ENCODE measurements at regions of chr1 and their contacts with region 1.

Region 1: DNA sequence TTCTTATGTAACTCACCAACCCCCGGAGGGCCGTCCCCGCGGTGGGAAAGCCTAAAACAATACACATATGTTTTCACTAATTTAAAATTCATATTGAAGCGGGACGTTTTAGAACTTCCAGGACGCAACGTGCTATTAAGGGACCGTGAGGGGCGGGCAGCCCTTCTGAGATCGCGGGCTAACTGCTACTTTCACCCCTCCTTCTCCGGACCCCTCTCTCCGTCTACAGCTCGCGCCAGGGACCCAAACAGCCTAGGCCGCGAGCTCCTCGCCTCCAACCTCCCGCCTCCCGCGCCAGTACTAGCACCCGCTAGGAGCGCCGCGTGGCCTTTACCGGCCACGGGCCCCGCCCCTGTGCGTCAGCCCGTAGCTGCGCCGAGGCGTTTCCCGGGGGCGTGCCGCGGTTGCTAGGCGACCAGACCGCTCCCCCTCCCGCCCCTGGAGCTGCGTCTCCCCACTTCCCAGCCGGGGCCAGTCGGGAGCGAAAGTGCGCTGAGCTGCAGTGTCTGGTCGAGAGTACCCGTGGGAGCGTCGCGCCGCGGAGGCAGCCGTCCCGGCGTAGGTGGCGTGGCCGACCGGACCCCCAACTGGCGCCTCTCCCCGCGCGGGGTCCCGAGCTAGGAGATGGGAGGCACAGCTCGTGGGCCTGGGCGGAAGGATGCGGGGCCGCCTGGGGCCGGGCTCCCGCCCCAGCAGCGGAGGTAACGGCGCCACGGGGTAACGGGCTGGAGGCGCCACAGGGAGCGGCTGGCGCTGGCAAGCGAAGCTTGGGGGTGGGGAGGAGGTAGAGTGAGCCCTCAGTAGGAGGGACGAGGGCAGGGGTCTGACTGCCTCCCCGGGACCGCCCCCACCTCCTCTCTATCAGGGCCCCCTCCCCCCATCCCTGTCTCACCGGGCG is at the start of gene DYRK3:
- DNase-seq: peak; percentile 95
- H3K4me3 Mint-ChIP-seq: peak within 1 kb of the TSS; percentile 80
- H3K27ac Mint-ChIP-seq: peak within 1 kb of the TSS; percentile 80
- H3K4me1 Mint-ChIP-seq: peaks cover 36% of the 10 kb centered on the region
- H3K27me3 Mint-ChIP-seq: peaks cover 23% of the 10 kb centered on the region
- total RNA-seq, gene DYRK3: 8.8 to 9.2 TPM

Region 2: DNA sequence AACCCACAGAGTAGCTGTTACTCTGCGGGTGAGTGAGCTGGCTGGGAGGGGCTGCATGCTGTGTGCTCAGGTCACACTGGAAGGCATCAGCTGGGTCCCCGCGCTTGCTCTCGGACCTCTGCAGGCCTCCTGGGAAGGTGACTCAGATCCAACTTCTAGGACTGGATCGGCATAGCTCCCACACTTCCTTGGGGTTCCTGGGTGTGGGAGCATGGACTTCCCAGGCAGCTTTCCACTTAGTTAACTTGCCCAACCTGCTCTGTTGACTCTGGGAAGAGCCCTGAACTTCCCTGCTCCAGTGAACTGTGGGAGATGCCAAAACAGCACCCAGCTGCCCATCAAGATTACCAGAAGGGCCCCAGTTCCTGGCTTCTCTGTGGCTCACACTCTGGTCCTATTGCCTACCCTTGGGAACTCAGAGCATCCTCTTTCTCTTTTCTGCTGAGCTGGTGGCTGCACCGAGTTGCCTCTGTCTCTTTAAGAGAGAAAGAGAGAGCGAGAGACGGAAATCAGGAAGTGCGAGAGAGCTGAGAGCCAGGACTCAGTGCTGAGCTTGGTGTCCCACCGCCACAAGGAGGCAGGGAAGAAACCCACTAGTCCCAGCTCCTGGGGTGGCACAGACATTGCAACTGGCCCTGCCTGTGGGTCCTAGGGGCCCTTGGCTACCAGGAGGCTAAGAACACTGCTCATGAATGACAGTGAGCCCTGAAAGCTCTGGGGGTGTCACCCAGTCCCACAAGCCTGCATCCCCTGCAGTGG is 165.2 kb before region 1 on chr1 and contains the start of gene IKBKE:
- CTCF ChIA-PET with region 1: interaction called, 5 read pairs
- POLR2A ChIA-PET with region 1: interaction called, 11 read pairs
- DNase-seq: peak; percentile 72
- H3K4me3 Mint-ChIP-seq: peak within 1 kb of the TSS; percentile 93
- H3K27ac Mint-ChIP-seq: peak within 1 kb of the TSS; percentile 77
- H3K4me1 Mint-ChIP-seq: peaks cover 86% of the 10 kb centered on the region
- H3K27me3 Mint-ChIP-seq: no peaks in the 10 kb centered on the region
- total RNA-seq, gene IKBKE: 61.8 to 63.6 TPM

Region 3: GRCh38 chr1:206489980-206490770 is 145.2 kb before region 1 on chr1:
- CTCF ChIA-PET with region 1: interaction called, 13 read pairs
- POLR2A ChIA-PET with region 1: no interaction called
- DNase-seq: peak; percentile 74
- H3K4me3 Mint-ChIP-seq: no peak overlapping the region
- H3K27ac Mint-ChIP-seq: peak overlapping the region; percentile 44
- H3K4me1 Mint-ChIP-seq: peaks cover 11% of the 10 kb centered on the region
- H3K27me3 Mint-ChIP-seq: no peaks in the 10 kb centered on the region

Region 4: GRCh38 chr1:206556750-206557635 is 78.3 kb before region 1 on chr1:
- CTCF ChIA-PET with region 1: interaction called, 10 read pairs
- POLR2A ChIA-PET with region 1: interaction called, 3 read pairs
- DNase-seq: peak; percentile 94
- H3K4me3 Mint-ChIP-seq: peak overlapping the region; percentile 92
- H3K27ac Mint-ChIP-seq: peak overlapping the region; percentile 94
- H3K4me1 Mint-ChIP-seq: peaks cover 68% of the 10 kb centered on the region
- H3K27me3 Mint-ChIP-seq: no peaks in the 10 kb centered on the region

Region 5: DNA sequence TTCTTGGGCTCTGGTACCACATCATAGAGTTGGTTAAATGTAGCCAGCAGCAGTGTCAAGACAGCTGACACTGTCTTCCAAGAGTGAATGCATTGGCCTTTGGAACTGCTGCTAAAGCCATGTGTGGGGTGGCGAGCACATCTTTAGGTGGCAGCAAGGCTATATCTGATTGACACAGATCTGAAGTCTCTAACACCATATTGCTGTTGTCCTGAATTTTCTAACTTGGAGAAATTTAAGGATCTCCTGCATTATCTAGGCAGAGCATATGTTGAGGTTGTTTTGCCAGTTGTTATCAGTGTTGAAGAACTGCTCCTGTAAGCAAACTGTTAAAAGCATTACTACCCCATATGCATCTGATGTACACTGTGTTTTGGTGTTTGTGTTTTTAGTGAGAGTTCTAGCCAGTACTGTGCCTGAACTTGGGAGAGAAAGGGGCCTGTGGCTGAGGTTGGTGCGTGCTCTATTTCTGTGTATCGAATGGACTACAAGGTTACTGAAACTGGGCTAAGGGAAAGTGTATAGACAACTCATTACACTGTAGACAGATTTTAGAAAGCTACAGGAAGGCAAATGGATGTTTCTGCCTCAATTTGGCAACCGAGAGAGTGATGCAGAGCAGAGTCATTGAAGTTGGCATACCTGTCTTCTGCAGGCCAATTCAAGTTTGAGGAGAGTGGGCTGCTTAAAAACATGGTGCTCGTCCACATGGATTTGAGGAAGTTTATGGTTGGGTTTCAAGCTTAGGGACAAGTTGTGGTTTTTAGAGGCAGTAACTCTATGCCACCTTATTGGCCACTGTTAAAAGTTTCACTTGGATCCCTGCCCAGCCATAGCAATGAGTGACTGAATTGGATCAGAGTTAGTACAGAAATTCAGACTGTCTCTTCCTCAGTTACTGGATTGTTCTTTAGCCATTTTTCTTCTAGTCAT is 16.9 kb after region 1 on chr1:
- CTCF ChIA-PET with region 1: interaction called, 25 read pairs
- POLR2A ChIA-PET with region 1: interaction called, 3 read pairs
- DNase-seq: no peak
- H3K4me3 Mint-ChIP-seq: no peak overlapping the region
- H3K27ac Mint-ChIP-seq: no peak overlapping the region
- H3K4me1 Mint-ChIP-seq: peaks cover 5% of the 10 kb centered on the region
- H3K27me3 Mint-ChIP-seq: peaks cover under 1% of the 10 kb centered on the region

Region 6: GRCh38 chr1:206658264-206658980 is 23.1 kb after region 1 on chr1:
- CTCF ChIA-PET with region 1: interaction called, 250 read pairs
- POLR2A ChIA-PET with region 1: interaction called, 33 read pairs
- DNase-seq: peak; percentile 63
- H3K4me3 Mint-ChIP-seq: no peak overlapping the region
- H3K27ac Mint-ChIP-seq: no peak overlapping the region
- H3K4me1 Mint-ChIP-seq: peaks cover 14% of the 10 kb centered on the region
- H3K27me3 Mint-ChIP-seq: peaks cover 25% of the 10 kb centered on the region

Region 7: DNA sequence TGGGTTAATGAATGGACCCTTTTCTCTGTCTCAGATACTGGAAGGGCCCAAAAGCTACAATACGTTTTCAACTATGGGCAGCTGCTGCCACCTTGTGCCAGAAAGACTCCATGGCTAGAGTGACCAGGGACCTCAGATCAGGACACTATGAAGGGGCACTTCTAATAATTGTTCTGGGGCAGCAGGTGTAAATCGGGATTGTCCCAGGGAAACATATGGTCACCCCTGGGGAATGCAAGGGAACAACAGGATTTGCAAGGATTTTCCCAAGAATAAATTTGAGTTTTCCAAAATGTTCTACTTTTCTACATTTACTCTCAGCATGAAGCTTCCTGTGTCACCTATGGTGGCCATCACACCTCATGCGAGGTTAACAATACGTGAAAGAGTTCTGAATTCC is 346.9 kb after region 1 on chr1:
- CTCF ChIA-PET with region 1: interaction called, 10 read pairs
- POLR2A ChIA-PET with region 1: no interaction called
- DNase-seq: peak; percentile 70
- H3K4me3 Mint-ChIP-seq: no peak overlapping the region
- H3K27ac Mint-ChIP-seq: no peak overlapping the region
- H3K4me1 Mint-ChIP-seq: no peaks in the 10 kb centered on the region
- H3K27me3 Mint-ChIP-seq: peaks cover 47% of the 10 kb centered on the region

Measured in activated CD4-positive, alpha-beta memory T cell treated with anti-CD3 and anti-CD28 coated beads, Interleukin-2, amount 10 ng/mL, durations not matched to agents 7 days and 5 days (primary cell).